HEK293T (cell line): ENCODE measurements at regions of chr17 and their contacts with region 1.

Region 1: DNA sequence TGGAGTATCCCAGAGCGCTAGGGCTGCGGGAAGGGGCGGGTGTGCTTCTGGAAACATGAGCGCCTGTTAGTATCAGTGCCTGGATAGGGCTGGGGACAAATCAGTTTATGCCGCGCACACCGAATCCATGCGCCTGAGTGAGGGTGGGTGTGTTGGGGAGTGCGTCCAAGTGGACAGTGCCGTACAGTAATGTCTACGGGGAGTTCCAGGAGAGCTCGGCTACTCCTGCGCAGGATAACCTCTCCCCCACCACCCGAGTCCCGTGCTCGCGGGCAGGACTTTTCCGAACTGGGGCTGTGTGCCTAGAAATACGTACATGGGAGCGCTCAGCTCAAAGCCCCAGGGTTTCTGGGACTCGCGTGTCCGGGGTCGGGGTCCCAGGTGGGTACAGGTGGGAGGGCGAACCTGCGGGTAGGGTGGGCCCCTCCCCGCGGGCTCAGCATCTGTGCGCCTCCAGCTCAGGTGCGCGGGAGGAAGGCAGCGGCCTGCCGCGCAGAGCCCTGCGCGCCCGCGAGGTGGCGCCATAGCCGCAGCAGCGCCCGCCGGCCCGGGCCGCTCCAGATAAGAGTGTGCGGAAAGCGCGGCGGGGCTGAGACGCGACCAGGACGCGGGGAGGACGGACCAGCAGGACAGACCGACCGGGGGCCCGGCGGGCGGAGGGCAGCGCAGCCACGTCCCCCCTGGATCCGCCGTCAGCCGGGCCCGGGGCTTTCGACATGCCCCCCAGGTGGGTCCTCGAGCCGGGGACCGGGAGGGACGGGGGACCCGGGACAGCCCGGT is at the start of gene HIC1:
- DNase-seq: peak; percentile 84

Region 2: DNA sequence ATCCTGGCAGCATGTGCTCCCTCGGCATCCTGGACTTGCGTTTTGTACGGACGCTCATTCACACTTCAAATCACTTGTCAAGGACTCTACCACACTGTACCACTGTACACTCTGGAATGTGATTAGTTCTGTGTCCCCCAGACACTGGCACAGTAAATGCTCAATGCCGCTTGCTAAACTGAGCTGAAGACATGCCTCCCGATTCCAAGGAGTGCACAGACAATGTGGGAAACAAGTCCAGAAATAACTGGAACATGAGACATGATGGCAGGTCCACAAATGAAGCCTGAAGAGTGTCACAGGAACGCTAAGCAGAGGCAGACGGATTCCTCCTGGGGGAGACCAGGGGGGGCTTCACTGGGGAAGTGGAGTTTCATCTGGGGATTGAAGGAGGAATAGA is 22.3 kb after region 1 on chr17:
- CTCF ChIA-PET with region 1: no interaction called
- POLR2A ChIA-PET with region 1: no interaction called
- DNase-seq: no peak

Region 3: DNA sequence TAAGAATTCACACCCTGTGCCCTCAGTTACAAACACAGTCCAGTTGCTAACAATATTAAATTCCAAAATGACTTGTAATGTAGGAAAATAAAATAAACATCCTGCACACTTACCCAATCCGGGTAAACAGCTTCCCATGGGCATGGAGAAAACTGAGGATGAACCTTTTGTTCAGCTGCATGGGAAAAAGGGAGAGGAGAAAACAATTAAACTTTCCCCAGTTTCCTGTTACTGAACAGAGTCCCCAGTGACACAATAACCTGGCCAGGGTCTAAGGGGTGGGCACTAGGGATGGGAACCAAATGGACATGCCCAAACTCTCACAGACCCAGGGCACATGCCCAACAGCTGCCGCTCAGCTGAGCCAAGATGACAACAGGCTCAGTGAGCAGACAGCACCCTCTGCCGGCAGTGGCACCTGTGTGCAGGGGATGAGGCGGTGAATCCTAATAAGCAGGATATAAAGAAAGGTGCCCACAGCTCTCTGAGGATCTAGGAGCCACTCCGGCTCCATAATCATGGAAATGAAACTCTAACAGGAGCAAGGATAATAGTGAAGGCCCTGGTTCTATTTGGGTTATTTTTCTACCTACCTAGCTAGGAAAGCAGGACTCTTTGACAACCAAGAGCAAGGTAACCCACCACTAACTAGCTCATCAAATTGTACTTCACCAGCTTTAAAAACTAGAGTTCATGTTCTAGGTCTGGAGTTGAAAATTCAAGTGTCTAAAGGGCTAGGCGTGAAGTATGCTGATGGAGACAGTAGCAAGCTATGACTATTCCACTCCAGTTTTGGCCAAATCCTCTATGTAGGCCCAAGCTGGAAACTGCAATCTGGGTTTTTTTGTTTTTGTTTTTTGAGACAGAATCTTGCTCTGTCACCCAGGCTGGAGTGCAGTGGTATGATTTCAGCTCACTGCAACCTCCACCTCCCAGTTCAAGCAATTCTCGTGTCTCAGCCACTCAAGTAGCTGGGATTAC is 190.1 kb after region 1 on chr17:
- CTCF ChIA-PET with region 1: interaction called, 27 read pairs
- POLR2A ChIA-PET with region 1: no interaction called
- DNase-seq: peak; percentile 87